Endothelial cell of umbilical vein (primary cell): ENCODE measurements at regions of chr21 and their contacts with region 1.

Region 1: GRCh38 chr21:38306433-38307141 is 49.8 kb downstream of the KCNJ15 start:
- DNase-seq: peak; percentile 90
- H3K4me3 ChIP-seq: no peak overlapping the region
- H3K27ac ChIP-seq: peak overlapping the region; percentile 43
- H3K4me1 ChIP-seq: peaks cover 25% of the 10 kb centered on the region
- H3K27me3 ChIP-seq: no peaks in the 10 kb centered on the region
- CTCF ChIP-seq: no peak
- POLR2A ChIP-seq: no peak

Region 2: GRCh38 chr21:36615274-36615964 is 1691.2 kb before region 1 on chr21:
- CTCF ChIA-PET with region 1: no interaction called
- POLR2A ChIA-PET with region 1: no interaction called
- dilution Hi-C with region 1: no loop called
- intact Hi-C with region 1: no loop called
- DNase-seq: no peak
- H3K4me3 ChIP-seq: no peak overlapping the region
- H3K27ac ChIP-seq: no peak overlapping the region
- H3K4me1 ChIP-seq: peaks cover under 1% of the 10 kb centered on the region
- H3K27me3 ChIP-seq: peaks cover 10 to 11% of the 10 kb centered on the region in 2 experiments
- CTCF ChIP-seq: peak; percentile 17 to 37
- POLR2A ChIP-seq: no peak

Region 3: GRCh38 chr21:37534431-37534830 is 772.2 kb before region 1 on chr21:
- CTCF ChIA-PET with region 1: no interaction called
- POLR2A ChIA-PET with region 1: interaction called, 10 read pairs
- dilution Hi-C with region 1: no loop called
- intact Hi-C with region 1: no loop called
- DNase-seq: no peak
- H3K4me3 ChIP-seq: no peak overlapping the region
- H3K27ac ChIP-seq: no peak overlapping the region
- H3K4me1 ChIP-seq: no peaks in the 10 kb centered on the region
- H3K27me3 ChIP-seq: peaks cover 8 to 15% of the 10 kb centered on the region in 2 experiments
- CTCF ChIP-seq: no peak
- POLR2A ChIP-seq: no peak

Region 4: DNA sequence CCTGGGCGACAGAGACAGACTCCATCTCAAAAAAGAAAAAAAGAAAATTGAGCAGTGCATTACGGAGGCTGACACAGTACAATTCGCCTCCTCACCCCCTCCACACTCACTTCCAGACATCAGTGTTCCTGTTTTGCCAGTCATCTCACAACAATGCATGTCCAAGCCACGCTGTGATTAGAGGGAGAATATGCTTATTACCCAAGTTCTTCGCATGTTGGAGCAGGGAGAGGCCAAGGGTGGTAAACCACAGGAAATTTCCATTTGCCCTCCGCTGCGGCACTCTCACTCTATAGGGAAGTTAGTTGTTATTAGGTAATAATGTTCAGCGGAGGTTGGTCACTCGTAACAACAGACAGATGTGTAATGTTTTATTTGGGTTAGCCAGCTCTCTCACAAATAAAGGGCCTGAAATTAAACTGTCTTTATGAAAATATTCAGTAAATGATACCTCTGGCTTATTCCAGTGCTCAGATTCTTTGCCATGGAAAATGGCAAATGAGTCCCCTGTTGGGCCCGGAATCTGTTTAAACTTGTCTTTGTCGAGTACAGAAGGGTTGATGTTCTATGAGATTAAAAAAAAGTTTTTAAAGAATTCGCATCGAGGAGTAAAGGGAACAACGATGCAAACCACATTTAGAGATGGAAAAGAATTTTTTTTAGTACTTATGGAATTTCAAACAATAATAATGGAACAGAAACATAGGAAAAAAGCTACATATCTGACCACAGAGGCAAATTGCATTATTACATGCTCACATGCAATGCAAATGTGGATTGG is 16.7 kb before region 1 on chr21:
- CTCF ChIA-PET with region 1: interaction called, 7 read pairs
- POLR2A ChIA-PET with region 1: no interaction called
- dilution Hi-C with region 1: no loop called
- intact Hi-C with region 1: loop called (anchors 2 kb)
- DNase-seq: peak; percentile 73
- H3K4me3 ChIP-seq: no peak overlapping the region
- H3K27ac ChIP-seq: peak overlapping the region; percentile 41
- H3K4me1 ChIP-seq: peaks cover 6% of the 10 kb centered on the region
- H3K27me3 ChIP-seq: peaks cover 0 to 3% of the 10 kb centered on the region in 2 experiments
- CTCF ChIP-seq: no peak
- POLR2A ChIP-seq: no peak

Region 5: GRCh38 chr21:38295997-38296764 is 10.4 kb before region 1 on chr21:
- CTCF ChIA-PET with region 1: interaction called, 8 read pairs
- POLR2A ChIA-PET with region 1: interaction called, 3 read pairs
- dilution Hi-C with region 1: no loop called
- intact Hi-C with region 1: loop called (anchors 1 kb)
- DNase-seq: peak; percentile 68
- H3K4me3 ChIP-seq: peak overlapping the region in 1 of 3 experiments; percentile 18
- H3K27ac ChIP-seq: no peak overlapping the region
- H3K4me1 ChIP-seq: peaks cover 28% of the 10 kb centered on the region
- H3K27me3 ChIP-seq: no peaks in the 10 kb centered on the region
- CTCF ChIP-seq: no peak
- POLR2A ChIP-seq: no peak

Region 6: GRCh38 chr21:38478782-38479181 is 172.2 kb after region 1 on chr21:
- CTCF ChIA-PET with region 1: no interaction called
- POLR2A ChIA-PET with region 1: no interaction called
- dilution Hi-C with region 1: no loop called
- intact Hi-C with region 1: loop called (anchors 10 kb)
- DNase-seq: no peak
- H3K4me3 ChIP-seq: no peak overlapping the region
- H3K27ac ChIP-seq: peak overlapping the region; percentile 99
- H3K4me1 ChIP-seq: peaks cover 94% of the 10 kb centered on the region
- H3K27me3 ChIP-seq: no peaks in the 10 kb centered on the region
- CTCF ChIP-seq: no peak
- POLR2A ChIP-seq: no peak